PC-9 (cell line): ENCODE measurements at regions of chr2 and their contacts with region 1.

Region 1: GRCh38 chr2:37585982-37586621 is 85.3 kb downstream of the CDC42EP3 start:
- DNase-seq: peak; percentile 43 to 92
- H3K4me3 ChIP-seq: peak overlapping the region; percentile 12; the same call in 1 of the 2 replicates
- H3K27ac ChIP-seq: peak overlapping the region; percentile 94
- H3K4me1 ChIP-seq: peaks cover 82% of the 10 kb centered on the region
- H3K27me3 ChIP-seq: no peaks in the 10 kb centered on the region
- CTCF ChIP-seq: no peak

Region 2: GRCh38 chr2:37337642-37338310 is 248.3 kb before region 1 on chr2:
- CTCF ChIA-PET with region 1: no interaction called
- POLR2A ChIA-PET with region 1: no interaction called
- intact Hi-C with region 1: no loop called
- DNase-seq: no peak
- H3K4me3 ChIP-seq: no peak overlapping the region
- H3K27ac ChIP-seq: no peak overlapping the region
- H3K4me1 ChIP-seq: no peaks in the 10 kb centered on the region
- H3K27me3 ChIP-seq: no peaks in the 10 kb centered on the region
- CTCF ChIP-seq: no peak

Region 3: DNA sequence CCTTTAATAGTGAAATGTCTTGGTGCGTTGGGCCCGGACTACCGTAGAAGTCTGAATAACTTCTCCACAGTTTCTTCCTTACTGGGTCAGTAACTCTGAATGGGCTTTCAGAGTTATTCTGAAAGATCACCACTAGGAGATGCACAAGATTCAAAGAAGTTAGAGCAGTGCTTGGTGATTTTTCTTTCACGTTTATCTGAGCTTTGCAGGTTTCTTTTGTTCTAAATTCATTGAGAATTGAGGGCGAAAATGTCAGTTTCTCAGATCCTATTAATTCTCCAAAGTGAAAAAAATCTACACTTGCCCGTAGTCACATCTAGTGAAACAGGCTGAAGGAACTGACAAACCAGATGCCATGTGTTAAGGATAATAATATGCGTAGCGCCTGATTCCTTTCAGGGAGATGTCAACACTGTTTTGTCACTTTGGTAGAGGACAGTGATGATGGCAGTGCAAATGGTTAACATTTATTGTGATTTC is 171.6 kb before region 1 on chr2:
- CTCF ChIA-PET with region 1: interaction called, 3 read pairs
- POLR2A ChIA-PET with region 1: interaction called, 7 read pairs
- intact Hi-C with region 1: loop called (anchors 10 kb)
- DNase-seq: peak; percentile 5 to 65
- H3K4me3 ChIP-seq: no peak overlapping the region
- H3K27ac ChIP-seq: no peak overlapping the region
- H3K4me1 ChIP-seq: no peaks in the 10 kb centered on the region
- H3K27me3 ChIP-seq: no peaks in the 10 kb centered on the region
- CTCF ChIP-seq: peak; percentile 94

Region 4: DNA sequence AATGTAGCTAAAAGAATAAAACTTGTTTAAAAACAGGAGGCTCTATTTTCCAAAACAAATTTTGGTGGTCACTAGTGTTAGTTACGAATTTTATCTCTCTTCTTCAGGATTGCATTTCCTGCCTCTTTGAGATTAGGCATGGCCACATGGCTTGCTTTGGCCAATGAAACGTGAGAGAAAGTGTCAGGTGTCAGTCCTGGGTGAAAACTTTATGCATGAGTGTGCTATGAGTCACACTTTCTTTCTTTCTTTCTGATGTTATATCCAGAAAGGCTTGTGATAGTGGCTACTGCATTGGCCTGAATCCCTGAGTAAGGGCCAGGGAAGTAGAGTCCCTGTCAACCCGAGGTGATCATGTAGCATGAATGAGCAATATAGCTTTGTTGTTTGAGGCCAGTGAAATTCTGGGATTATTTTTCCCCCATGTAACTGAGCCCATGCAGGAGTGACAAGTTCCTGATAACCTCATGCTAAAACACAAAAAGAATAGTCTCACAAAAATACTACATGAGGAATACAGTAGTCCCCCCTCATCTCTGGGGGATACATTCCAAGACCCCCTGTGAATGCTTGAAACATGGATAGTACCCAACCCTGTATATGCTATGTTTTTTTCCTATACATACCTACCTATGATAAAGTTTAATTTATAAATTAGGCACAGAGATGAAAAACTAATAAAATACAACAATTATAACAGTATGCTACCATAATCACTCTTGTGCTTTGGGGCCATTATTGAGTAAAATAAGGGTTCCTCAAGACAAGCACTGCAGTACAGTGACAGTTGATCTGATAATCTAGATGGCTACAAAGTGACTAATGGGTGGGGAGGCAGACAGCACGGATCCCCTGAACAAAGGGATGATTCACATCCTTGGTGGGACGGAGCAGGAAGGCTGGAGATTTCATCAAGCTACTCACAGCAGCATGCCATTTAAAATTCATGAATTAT is 24.2 kb before region 1 on chr2:
- CTCF ChIA-PET with region 1: no interaction called
- POLR2A ChIA-PET with region 1: no interaction called
- intact Hi-C with region 1: loop called (anchors 2 kb)
- DNase-seq: peak; percentile 58 to 85
- H3K4me3 ChIP-seq: no peak overlapping the region
- H3K27ac ChIP-seq: peak overlapping the region; percentile 92
- H3K4me1 ChIP-seq: peaks cover 25% of the 10 kb centered on the region
- H3K27me3 ChIP-seq: no peaks in the 10 kb centered on the region
- CTCF ChIP-seq: no peak

Region 5: GRCh38 chr2:37653805-37654378 is 67.8 kb after region 1 on chr2:
- CTCF ChIA-PET with region 1: interaction called, 4 read pairs
- POLR2A ChIA-PET with region 1: no interaction called
- intact Hi-C with region 1: loop called (anchors 5 kb)
- DNase-seq: no peak
- H3K4me3 ChIP-seq: no peak overlapping the region
- H3K27ac ChIP-seq: peak overlapping the region; percentile 60; the same call in 1 of the 2 replicates
- H3K4me1 ChIP-seq: peaks cover 44% of the 10 kb centered on the region
- H3K27me3 ChIP-seq: no peaks in the 10 kb centered on the region
- CTCF ChIP-seq: no peak

Region 6: GRCh38 chr2:37776487-37776886 is 190.4 kb after region 1 on chr2:
- CTCF ChIA-PET with region 1: no interaction called
- POLR2A ChIA-PET with region 1: no interaction called
- intact Hi-C with region 1: loop called (anchors 5 kb)
- DNase-seq: peak; percentile 76 to 93
- H3K4me3 ChIP-seq: no peak overlapping the region
- H3K27ac ChIP-seq: peak overlapping the region; percentile 62
- H3K4me1 ChIP-seq: peaks cover 56% of the 10 kb centered on the region
- H3K27me3 ChIP-seq: no peaks in the 10 kb centered on the region
- CTCF ChIP-seq: no peak